HepG2 (cell line): ENCODE measurements at regions of chr16 and their contacts with region 1.

Region 1: GRCh38 chr16:66608241-66609138 is 4.0 kb downstream of the CMTM3 start:
- DNase-seq: peak; percentile 93
- ATAC-seq: peak; percentile 73
- H3K4me3 ChIP-seq: no peak overlapping the region
- H3K27ac ChIP-seq: peak overlapping the region; percentile 61
- H3K4me1 ChIP-seq: peaks cover 40% of the 10 kb centered on the region
- H3K27me3 ChIP-seq: no peaks in the 10 kb centered on the region
- CTCF ChIP-seq: peak; percentile 98
- EP300 ChIP-seq: peak in 1 of 2 experiments; percentile 20; a peak in 2 of 4 replicates
- POLR2A ChIP-seq: peak in 1 of 2 experiments; percentile 35; a peak in 1 of 4 replicates
- RAD21 ChIP-seq: peak; percentile 96

Region 2: DNA sequence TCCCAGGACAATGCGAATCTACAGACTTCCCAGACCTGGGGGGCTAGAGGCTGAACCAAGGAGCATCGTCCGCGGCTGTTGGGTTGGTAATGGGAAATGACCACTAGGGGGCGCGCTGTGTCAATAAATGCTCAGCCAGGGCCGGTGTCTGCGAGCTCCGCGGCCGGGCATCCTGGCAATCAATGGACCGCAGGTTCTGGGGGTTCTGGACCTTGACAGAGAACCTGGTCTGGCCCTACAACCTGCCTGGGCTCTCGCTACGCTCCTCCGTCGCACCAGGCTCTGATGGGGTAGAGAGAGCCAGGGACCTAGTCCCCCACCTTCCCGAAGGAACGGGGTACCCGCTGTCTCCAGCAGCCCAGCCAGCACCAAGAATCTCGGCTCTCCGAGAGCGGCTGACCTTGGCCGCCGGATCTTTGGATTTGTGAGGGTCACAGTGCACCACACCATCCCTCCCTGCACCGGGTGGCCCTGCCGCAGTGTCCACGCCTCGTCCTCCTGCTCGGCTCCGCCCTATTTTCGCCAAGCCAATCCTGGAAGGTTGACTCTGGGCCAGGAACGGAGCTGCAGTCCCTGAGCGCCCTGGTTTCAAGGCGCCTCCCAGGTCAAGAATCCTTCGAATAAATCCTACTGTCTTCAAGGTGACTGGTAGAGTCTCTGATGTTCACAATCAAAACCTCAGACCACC is 201.8 kb before region 1 on chr16:
- CTCF ChIA-PET with region 1: interaction called, 7 read pairs
- POLR2A ChIA-PET with region 1: interaction called, 5 read pairs
- in situ Hi-C with region 1: no loop called
- intact Hi-C with region 1: loop called (anchors 1 kb)
- DNase-seq: peak; percentile 73
- ATAC-seq: peak; percentile 84
- H3K4me3 ChIP-seq: peak overlapping the region; percentile 47 to 76 (median 50)
- H3K27ac ChIP-seq: peak overlapping the region; percentile 94
- H3K4me1 ChIP-seq: peaks cover 50% of the 10 kb centered on the region
- H3K27me3 ChIP-seq: no peaks in the 10 kb centered on the region
- CTCF ChIP-seq: peak; percentile 99
- EP300 ChIP-seq: no peak; a peak in 1 of 4 replicates
- POLR2A ChIP-seq: 0 out of 4 replicates have a peak, but pooled peaks of 1 of the 2 experiments have one; percentile 44
- RAD21 ChIP-seq: peak; percentile 99

Region 3: GRCh38 chr16:66552286-66553177 is 56.0 kb before region 1 on chr16 and contains the start of gene CKLF:
- CTCF ChIA-PET with region 1: no interaction called
- POLR2A ChIA-PET with region 1: interaction called, 23 read pairs
- in situ Hi-C with region 1: no loop called
- intact Hi-C with region 1: loop called (anchors 2 kb)
- DNase-seq: peak; percentile 85
- ATAC-seq: peak; percentile 80
- H3K4me3 ChIP-seq: peak within 1 kb of the TSS; percentile 70 to 79 (median 73)
- H3K27ac ChIP-seq: peak within 1 kb of the TSS; percentile 87
- H3K4me1 ChIP-seq: peaks cover 84% of the 10 kb centered on the region
- H3K27me3 ChIP-seq: no peaks in the 10 kb centered on the region
- CTCF ChIP-seq: no peak; the same call in 1 of the 2 replicates
- EP300 ChIP-seq: 0 out of 4 replicates have a peak, but pooled peaks of 1 of the 2 experiments have one; percentile 13
- POLR2A ChIP-seq: peak; percentile 87 to 97
- RAD21 ChIP-seq: 0 out of 2 replicates have a peak, but pooled peaks have one; percentile 33
- total RNA-seq, gene CKLF: 83.0 and 120 TPM in 2 replicates

Region 4: GRCh38 chr16:66660422-66661209 is 52.1 kb after region 1 on chr16:
- CTCF ChIA-PET with region 1: interaction called, 5 read pairs
- POLR2A ChIA-PET with region 1: interaction called, 4 read pairs
- in situ Hi-C with region 1: no loop called
- intact Hi-C with region 1: loop called (anchors 1 kb)
- DNase-seq: peak; percentile 84
- ATAC-seq: peak; percentile 98
- H3K4me3 ChIP-seq: peak overlapping the region in 2 of 3 experiments; percentile 0 to 23; a peak in 2 of 6 replicates
- H3K27ac ChIP-seq: peak overlapping the region; percentile 39
- H3K4me1 ChIP-seq: peaks cover 37% of the 10 kb centered on the region
- H3K27me3 ChIP-seq: no peaks in the 10 kb centered on the region
- CTCF ChIP-seq: peak; percentile 77
- EP300 ChIP-seq: no peak
- POLR2A ChIP-seq: no peak
- RAD21 ChIP-seq: no peak

Region 5: DNA sequence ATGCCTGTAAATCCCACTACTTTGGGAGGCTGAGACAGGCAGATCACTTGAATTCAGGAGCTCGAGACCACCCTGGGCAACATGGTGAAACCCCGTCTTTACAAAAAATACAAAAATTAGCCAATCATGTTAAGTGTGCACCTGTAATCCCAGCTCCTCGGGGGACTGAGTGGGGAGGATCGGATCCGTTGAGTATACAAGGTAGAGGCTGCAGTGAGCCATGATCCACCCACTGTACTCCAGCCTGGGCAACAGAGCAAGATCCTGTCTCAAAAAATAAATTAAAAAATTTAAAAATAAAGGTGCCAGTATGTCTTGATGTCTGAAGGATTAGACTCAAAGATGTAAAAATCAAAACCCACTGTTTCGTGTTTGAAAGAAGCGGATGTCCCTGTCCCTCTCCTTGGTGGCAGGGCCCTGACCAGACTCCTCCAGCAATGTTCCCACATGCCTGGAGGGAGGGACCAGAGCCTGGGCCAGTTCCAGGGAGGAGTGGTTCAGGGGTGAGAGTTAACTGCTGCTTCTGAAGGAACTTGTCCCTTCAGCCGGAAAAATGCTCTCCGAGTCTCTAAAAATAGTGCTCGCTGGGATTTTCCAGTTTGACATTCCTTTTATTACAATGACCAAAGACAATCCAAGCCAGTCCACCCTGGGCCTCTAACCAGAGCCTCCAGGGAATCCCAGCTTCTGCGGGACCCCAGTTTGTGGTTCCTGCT is 97.5 kb after region 1 on chr16:
- CTCF ChIA-PET with region 1: no interaction called
- POLR2A ChIA-PET with region 1: no interaction called
- in situ Hi-C with region 1: no loop called
- intact Hi-C with region 1: no loop called
- DNase-seq: no peak
- ATAC-seq: no peak
- H3K4me3 ChIP-seq: no peak overlapping the region
- H3K27ac ChIP-seq: no peak overlapping the region
- H3K4me1 ChIP-seq: 0 out of 2 replicates have a peak, but pooled peaks cover 7% of the 10 kb centered on the region
- H3K27me3 ChIP-seq: peaks cover 0 to 24% of the 10 kb centered on the region in 2 experiments; a peak in 2 of 5 replicates
- CTCF ChIP-seq: no peak
- EP300 ChIP-seq: no peak
- POLR2A ChIP-seq: no peak
- RAD21 ChIP-seq: no peak

Region 6: GRCh38 chr16:66728117-66728787 is 119.8 kb after region 1 on chr16:
- CTCF ChIA-PET with region 1: interaction called, 3 read pairs
- POLR2A ChIA-PET with region 1: no interaction called
- in situ Hi-C with region 1: no loop called
- intact Hi-C with region 1: loop called (anchors 2 kb)
- DNase-seq: peak; percentile 60
- ATAC-seq: peak; percentile 84
- H3K4me3 ChIP-seq: no peak overlapping the region
- H3K27ac ChIP-seq: no peak overlapping the region
- H3K4me1 ChIP-seq: no peaks in the 10 kb centered on the region
- H3K27me3 ChIP-seq: no peaks in the 10 kb centered on the region
- CTCF ChIP-seq: peak; percentile 64
- EP300 ChIP-seq: no peak
- POLR2A ChIP-seq: no peak
- RAD21 ChIP-seq: no peak

Region 7: GRCh38 chr16:66810391-66810790 is 201.9 kb after region 1 on chr16:
- CTCF ChIA-PET with region 1: no interaction called
- POLR2A ChIA-PET with region 1: no interaction called
- in situ Hi-C with region 1: no loop called
- intact Hi-C with region 1: no loop called
- DNase-seq: no peak
- ATAC-seq: peak; percentile 51; the same call in 2 of the 3 replicates
- H3K4me3 ChIP-seq: no peak overlapping the region
- H3K27ac ChIP-seq: no peak overlapping the region
- H3K4me1 ChIP-seq: no peaks in the 10 kb centered on the region
- H3K27me3 ChIP-seq: no peaks in the 10 kb centered on the region
- CTCF ChIP-seq: no peak
- EP300 ChIP-seq: no peak
- POLR2A ChIP-seq: no peak
- RAD21 ChIP-seq: no peak